SK-N-SH (cell line): ENCODE measurements at regions of chr1 and their contacts with region 1.

Region 1: DNA sequence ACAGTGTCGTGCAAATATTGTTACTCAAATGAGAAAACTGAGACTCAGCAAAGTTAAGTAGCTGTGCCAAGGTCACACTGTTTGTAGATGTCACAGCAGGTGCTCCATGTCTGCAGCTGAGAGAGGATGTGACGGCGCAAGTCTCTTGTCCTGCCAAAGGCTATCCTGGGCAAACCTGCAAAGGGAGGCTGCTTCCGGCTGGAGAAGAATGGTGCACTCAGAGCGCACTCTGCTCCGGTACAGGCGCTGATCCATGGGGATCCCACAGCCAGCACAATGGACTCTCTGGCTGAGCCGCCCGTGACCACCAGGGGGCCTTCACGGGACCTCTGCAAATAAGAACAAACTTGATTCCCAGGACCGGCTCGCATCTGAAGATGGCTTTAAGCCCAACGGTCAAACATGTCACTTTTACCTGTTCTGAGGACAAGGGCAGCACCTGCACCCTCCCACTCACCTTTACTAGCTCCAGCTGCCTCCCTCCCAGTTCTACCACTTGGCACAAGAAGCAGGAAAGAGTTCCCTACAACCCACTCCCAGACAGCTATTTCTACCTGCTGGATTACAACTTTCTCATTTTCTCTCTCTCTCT is 21.9 kb downstream of the RD3 start:
- DNase-seq: peak; percentile 83
- H3K4me3 ChIP-seq: peak overlapping the region in 1 of 2 experiments; percentile 22; a peak in 1 of 4 replicates
- H3K27ac ChIP-seq: no peak overlapping the region
- H3K4me1 ChIP-seq: peaks cover 0 to 12% of the 10 kb centered on the region in 2 experiments; a peak in 2 of 4 replicates
- H3K27me3 ChIP-seq: 0 out of 2 replicates have a peak, but pooled peaks cover 8% of the 10 kb centered on the region
- CTCF ChIP-seq: peak; percentile 90
- EP300 ChIP-seq: no peak
- RAD21 ChIP-seq: peak; percentile 76

Region 2: GRCh38 chr1:211415700-211416099 is 54.3 kb before region 1 on chr1:
- CTCF ChIA-PET with region 1: interaction called, 13 read pairs
- POLR2A ChIA-PET with region 1: no interaction called
- DNase-seq: no peak
- H3K4me3 ChIP-seq: no peak overlapping the region
- H3K27ac ChIP-seq: no peak overlapping the region
- H3K4me1 ChIP-seq: peaks cover 0 to 3% of the 10 kb centered on the region in 2 experiments; a peak in 1 of 4 replicates
- H3K27me3 ChIP-seq: no peaks in the 10 kb centered on the region
- CTCF ChIP-seq: no peak
- EP300 ChIP-seq: no peak
- RAD21 ChIP-seq: no peak

Region 3: DNA sequence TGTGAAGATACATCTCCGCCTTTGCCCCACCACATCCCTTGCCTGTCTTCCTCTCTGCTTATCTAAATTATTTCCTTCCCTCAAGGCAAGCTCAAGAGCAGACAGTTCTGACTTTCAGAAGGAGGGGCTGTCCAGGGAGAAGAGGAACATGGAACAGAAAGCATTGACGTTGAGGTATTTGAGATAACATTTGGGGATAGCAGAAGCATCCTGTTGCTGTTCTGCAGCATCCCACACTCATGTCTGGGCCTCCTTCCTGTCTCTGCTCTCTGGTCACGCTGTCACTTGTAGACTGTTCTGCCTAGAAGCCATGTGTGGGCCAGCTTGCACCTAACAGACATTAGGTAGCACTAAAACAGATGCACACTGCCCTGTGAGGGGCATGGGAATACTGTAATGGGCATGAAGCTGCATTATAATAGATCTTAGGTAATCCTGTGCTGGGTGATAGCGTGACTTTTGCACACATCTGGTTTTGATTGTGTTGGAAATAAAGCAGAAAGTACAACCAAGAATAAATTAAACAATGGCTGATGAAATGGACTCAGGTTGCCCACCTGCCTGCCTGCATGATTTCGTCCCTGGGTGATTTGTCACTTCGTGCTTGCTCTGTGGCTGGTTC is 22.6 kb after region 1 on chr1:
- CTCF ChIA-PET with region 1: interaction called, 101 read pairs
- POLR2A ChIA-PET with region 1: no interaction called
- DNase-seq: peak; percentile 66
- H3K4me3 ChIP-seq: no peak overlapping the region
- H3K27ac ChIP-seq: peak overlapping the region in 1 of 2 experiments; percentile 98; a peak in 2 of 4 replicates
- H3K4me1 ChIP-seq: peaks cover 0 to 59% of the 10 kb centered on the region in 2 experiments; a peak in 2 of 4 replicates
- H3K27me3 ChIP-seq: no peaks in the 10 kb centered on the region
- CTCF ChIP-seq: no peak
- EP300 ChIP-seq: peak in 1 of 2 experiments; percentile 69; a peak in 2 of 4 replicates
- RAD21 ChIP-seq: no peak

Region 4: DNA sequence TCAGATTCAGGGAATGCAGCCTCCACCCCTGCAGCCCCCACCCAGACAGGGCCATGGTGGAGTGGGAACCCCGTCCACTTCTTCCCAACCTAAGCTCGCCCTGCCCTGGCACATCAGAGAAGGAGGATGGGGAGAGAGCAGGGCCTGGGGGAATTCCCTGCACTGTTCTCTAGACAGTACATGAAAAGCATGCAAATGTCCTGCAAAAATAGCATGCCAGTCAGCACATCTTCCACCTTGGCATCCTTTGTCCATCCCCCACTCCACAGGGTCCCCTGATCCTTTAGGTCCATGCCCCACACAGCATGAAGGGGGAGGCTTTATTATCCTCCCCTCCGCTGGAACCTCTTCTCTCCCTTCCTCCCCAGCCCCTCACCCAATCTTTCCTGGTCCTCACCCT is 57.0 kb after region 1 on chr1:
- CTCF ChIA-PET with region 1: interaction called, 14 read pairs
- POLR2A ChIA-PET with region 1: no interaction called
- DNase-seq: no peak
- H3K4me3 ChIP-seq: no peak overlapping the region
- H3K27ac ChIP-seq: no peak overlapping the region
- H3K4me1 ChIP-seq: no peaks in the 10 kb centered on the region; a peak in 1 of 4 replicates
- H3K27me3 ChIP-seq: no peaks in the 10 kb centered on the region
- CTCF ChIP-seq: no peak
- EP300 ChIP-seq: no peak
- RAD21 ChIP-seq: no peak

Region 5: GRCh38 chr1:211885747-211886522 is 415.9 kb after region 1 on chr1:
- CTCF ChIA-PET with region 1: no interaction called
- POLR2A ChIA-PET with region 1: no interaction called
- DNase-seq: no peak
- H3K4me3 ChIP-seq: no peak overlapping the region
- H3K27ac ChIP-seq: no peak overlapping the region
- H3K4me1 ChIP-seq: no peaks in the 10 kb centered on the region
- H3K27me3 ChIP-seq: no peaks in the 10 kb centered on the region; the same call in 1 of the 2 replicates
- CTCF ChIP-seq: no peak
- EP300 ChIP-seq: no peak
- RAD21 ChIP-seq: no peak